ENCODE measurements at regions of chr11 and their contacts with region 1.

Region 1: GRCh38 chr11:47407746-47408590 is at the start of gene SLC39A13:
- DNase-seq: peak; percentile 81 to 95
- H3K4me3 ChIP-seq: peak within 1 kb of the TSS; percentile 63 to 79 (median 74)
- H3K27ac ChIP-seq: peak within 1 kb of the TSS; percentile 86
- H3K4me1 ChIP-seq: peaks cover 5 to 13% (median 9%) of the 10 kb centered on the region in 4 experiments
- H3K27me3 ChIP-seq: no peaks in the 10 kb centered on the region
- CTCF ChIP-seq: peak; percentile 74 to 86 (median 86)
- EP300 ChIP-seq: no peak
- POLR2A ChIP-seq: peak; percentile 63 to 91
- RAD21 ChIP-seq: peak; percentile 70 to 75
- total RNA-seq, gene SLC39A13: 20.9 and 23.2 TPM in 2 replicates

Region 2: DNA sequence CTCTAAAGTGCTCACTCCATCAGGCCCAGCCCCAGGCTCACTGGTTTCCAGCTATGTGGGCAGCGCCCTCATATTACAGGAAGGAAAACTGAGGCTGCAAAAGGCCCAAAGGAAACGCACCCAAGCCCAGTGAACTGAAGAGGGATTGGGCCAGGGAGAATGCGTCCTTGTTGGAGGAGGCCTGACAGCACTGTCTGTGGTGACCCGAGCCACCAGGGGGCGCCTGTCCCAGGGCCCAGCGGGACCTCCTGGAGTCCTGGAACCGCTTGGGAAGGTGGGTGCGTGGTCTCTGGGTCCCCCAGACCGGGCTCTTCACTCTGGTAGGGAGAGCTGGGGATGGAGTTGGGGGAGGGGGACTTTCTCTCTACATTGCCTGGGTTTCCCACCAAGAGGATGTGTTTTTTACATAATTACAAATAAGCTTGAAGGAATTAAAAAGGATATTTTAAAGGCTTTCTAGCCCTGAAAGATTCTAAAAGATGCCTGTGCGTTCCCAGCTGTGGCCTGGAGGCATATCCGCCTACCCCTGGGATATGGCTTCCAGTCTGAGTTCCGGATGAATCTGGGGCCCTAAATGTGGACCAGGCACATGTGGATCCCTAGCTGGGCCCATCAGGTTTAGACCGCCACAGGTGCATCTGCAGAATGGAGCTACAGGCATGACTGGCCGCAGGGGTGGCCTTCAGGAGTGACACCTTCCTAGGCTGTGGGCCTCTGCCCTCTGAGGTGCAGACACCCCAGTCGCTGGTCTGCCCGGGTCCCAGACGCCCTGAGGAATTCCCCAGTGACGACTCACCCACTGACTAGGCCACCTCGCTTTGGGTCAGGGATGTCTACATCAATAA is 33.9 kb before region 1 on chr11:
- CTCF ChIA-PET with region 1: interaction called, 44 read pairs
- POLR2A ChIA-PET with region 1: interaction called, 5 read pairs
- DNase-seq: peak; percentile 49 to 93
- H3K4me3 ChIP-seq: no peak overlapping the region
- H3K27ac ChIP-seq: no peak overlapping the region
- H3K4me1 ChIP-seq: peaks cover 0 to 5% (median 2%) of the 10 kb centered on the region in 4 experiments; a peak in 5 of 7 replicates
- H3K27me3 ChIP-seq: no peaks in the 10 kb centered on the region
- CTCF ChIP-seq: peak; percentile 90 to 97 (median 94)
- EP300 ChIP-seq: no peak
- POLR2A ChIP-seq: no peak
- RAD21 ChIP-seq: peak; percentile 60 to 73

Region 3: DNA sequence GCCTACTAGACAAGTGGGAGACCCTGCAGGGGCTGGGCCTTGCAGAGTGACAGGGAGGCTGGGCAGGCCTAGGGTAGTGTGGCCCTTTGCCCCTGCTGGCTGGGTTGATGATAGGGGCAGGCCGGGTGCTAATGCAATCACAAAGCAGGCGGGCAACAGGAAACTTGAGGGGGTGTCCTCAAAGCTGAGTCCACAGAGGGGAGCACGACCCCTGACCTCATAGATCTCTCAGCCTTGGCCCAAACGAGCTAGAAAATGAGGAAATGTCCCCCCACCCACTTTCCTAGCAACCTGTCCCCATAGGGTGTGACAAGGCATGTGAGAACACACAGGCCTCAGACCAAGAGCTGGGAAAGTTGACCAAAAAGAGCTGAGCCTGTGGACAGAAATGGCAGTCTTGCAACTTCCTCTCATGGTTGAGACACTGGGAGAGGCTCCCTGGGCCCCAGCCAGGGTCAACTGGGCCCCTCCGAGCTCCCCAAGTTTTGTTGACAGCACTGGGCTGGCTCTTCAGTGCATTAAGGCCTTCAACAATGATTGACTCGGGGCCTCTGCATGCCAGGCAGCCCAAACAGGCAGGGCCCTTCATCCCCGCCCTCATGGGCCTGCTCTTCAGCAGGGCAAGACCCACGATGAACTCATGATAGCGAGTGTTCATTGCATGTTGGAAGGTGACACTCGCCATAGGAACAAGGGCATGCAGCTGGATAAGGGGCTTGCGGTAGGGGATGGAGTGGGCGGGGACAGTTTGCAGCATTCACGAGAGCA is 19.9 kb before region 1 on chr11:
- CTCF ChIA-PET with region 1: interaction called, 18 read pairs
- POLR2A ChIA-PET with region 1: interaction called, 3 read pairs
- DNase-seq: no peak
- H3K4me3 ChIP-seq: no peak overlapping the region
- H3K27ac ChIP-seq: no peak overlapping the region; the same call in 1 of the 2 replicates
- H3K4me1 ChIP-seq: peaks cover 0 to 3% (median 0%) of the 10 kb centered on the region in 4 experiments; a peak in 2 of 7 replicates
- H3K27me3 ChIP-seq: no peaks in the 10 kb centered on the region
- CTCF ChIP-seq: no peak
- EP300 ChIP-seq: no peak
- POLR2A ChIP-seq: no peak
- RAD21 ChIP-seq: no peak

Region 4: GRCh38 chr11:47394322-47395222 is 13.4 kb before region 1 on chr11:
- CTCF ChIA-PET with region 1: interaction called, 18 read pairs
- POLR2A ChIA-PET with region 1: interaction called, 15 read pairs
- DNase-seq: no peak
- H3K4me3 ChIP-seq: no peak overlapping the region
- H3K27ac ChIP-seq: no peak overlapping the region
- H3K4me1 ChIP-seq: peaks cover 0 to 7% (median 3%) of the 10 kb centered on the region in 4 experiments; a peak in 4 of 7 replicates
- H3K27me3 ChIP-seq: no peaks in the 10 kb centered on the region
- CTCF ChIP-seq: no peak
- EP300 ChIP-seq: no peak
- POLR2A ChIP-seq: no peak
- RAD21 ChIP-seq: no peak

Region 5: GRCh38 chr11:47418454-47419259 is 10.7 kb after region 1 on chr11:
- CTCF ChIA-PET with region 1: interaction called, 59 read pairs
- POLR2A ChIA-PET with region 1: interaction called, 140 read pairs
- DNase-seq: no peak
- H3K4me3 ChIP-seq: no peak overlapping the region
- H3K27ac ChIP-seq: no peak overlapping the region
- H3K4me1 ChIP-seq: peaks cover 0 to 2% (median 0%) of the 10 kb centered on the region in 4 experiments; a peak in 2 of 7 replicates
- H3K27me3 ChIP-seq: no peaks in the 10 kb centered on the region
- CTCF ChIP-seq: no peak
- EP300 ChIP-seq: no peak
- POLR2A ChIP-seq: peak in 1 of 2 experiments; percentile 60; a peak in 1 of 3 replicates
- RAD21 ChIP-seq: no peak

Region 6: GRCh38 chr11:47426061-47426956 is 18.3 kb after region 1 on chr11 and contains the start of gene PSMC3:
- CTCF ChIA-PET with region 1: interaction called, 59 read pairs
- POLR2A ChIA-PET with region 1: interaction called, 140 read pairs
- DNase-seq: peak; percentile 81 to 98
- H3K4me3 ChIP-seq: peak within 1 kb of the TSS; percentile 87 to 99 (median 96)
- H3K27ac ChIP-seq: peak within 1 kb of the TSS; percentile 98
- H3K4me1 ChIP-seq: peaks cover 0 to 6% (median 0%) of the 10 kb centered on the region in 4 experiments; a peak in 3 of 7 replicates
- H3K27me3 ChIP-seq: no peaks in the 10 kb centered on the region
- CTCF ChIP-seq: no peak
- EP300 ChIP-seq: peak in 1 of 2 experiments; percentile 93; a peak in 1 of 3 replicates
- POLR2A ChIP-seq: peak; percentile 58 to 86
- RAD21 ChIP-seq: no peak
- total RNA-seq, gene PSMC3: 159 and 160 TPM in 2 replicates

Region 7: DNA sequence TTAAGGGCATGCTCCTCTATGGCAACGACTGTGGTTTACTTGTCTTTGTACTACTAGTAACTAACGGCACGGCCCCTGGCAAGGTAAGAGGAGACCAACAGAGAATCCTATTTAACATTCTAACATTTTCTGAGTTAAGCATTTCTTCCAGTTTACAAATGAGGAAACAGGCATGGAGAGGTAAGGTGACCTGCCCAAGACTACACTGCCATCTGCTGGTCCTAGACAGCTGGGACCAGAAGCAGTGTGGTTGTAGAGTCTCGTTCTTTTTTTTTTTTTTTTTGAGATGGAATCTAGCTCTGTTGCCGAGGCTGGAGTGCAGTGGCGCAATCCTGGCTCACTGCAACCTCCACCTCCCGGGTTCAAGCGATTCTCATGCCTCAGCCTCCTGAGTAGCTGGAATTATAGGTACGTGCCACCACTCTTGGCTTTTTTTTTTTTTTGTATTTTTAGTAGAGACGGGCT is 46.2 kb after region 1 on chr11:
- CTCF ChIA-PET with region 1: interaction called, 11 read pairs
- POLR2A ChIA-PET with region 1: no interaction called
- DNase-seq: no peak
- H3K4me3 ChIP-seq: no peak overlapping the region
- H3K27ac ChIP-seq: no peak overlapping the region
- H3K4me1 ChIP-seq: no peaks in the 10 kb centered on the region; a peak in 1 of 7 replicates
- H3K27me3 ChIP-seq: no peaks in the 10 kb centered on the region
- CTCF ChIP-seq: peak; percentile 75 to 82 (median 76)
- EP300 ChIP-seq: no peak
- POLR2A ChIP-seq: no peak
- RAD21 ChIP-seq: peak; percentile 79 to 81

Region 8: DNA sequence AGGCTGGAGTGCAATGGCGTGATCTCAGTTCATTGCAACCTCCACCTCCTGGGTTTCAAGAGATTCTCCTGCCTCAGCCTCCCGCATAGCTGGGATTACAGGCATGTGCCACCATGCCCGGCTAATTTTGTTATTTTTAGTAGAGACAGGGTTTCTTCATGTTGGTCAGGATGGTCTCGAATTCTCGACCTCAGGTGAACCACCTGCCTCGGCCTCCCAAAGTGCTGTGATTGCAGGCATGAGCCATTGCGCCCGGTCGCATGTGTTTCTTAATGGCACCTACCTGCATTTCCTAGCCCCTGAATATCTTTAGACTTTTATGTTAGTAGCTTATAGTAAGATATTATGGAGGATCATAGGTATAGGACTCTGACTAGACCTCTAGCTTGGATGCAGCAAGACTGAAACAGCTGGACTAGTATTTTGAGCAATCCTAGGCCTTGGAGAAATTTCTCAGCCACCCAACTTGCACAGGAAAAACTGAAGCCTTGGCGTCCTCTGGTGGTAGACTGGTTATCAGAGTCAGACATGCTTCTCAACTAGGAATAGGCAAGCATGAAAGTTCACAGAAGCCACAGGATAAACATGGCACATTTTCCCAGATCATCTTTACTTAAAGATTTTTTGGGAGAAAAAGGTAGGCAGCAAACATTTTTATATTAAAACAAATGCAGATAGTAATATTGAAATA is 208.9 kb after region 1 on chr11:
- CTCF ChIA-PET with region 1: no interaction called
- POLR2A ChIA-PET with region 1: no interaction called
- DNase-seq: no peak
- H3K4me3 ChIP-seq: no peak overlapping the region
- H3K27ac ChIP-seq: no peak overlapping the region
- H3K4me1 ChIP-seq: no peaks in the 10 kb centered on the region
- H3K27me3 ChIP-seq: no peaks in the 10 kb centered on the region
- CTCF ChIP-seq: peak; percentile 14 to 83 (median 68)
- EP300 ChIP-seq: no peak
- POLR2A ChIP-seq: no peak
- RAD21 ChIP-seq: peak; percentile 88 to 90